Astrocyte of the cerebellum (primary cell): ENCODE measurements at regions of chr17 and their contacts with region 1.

Region 1: DNA sequence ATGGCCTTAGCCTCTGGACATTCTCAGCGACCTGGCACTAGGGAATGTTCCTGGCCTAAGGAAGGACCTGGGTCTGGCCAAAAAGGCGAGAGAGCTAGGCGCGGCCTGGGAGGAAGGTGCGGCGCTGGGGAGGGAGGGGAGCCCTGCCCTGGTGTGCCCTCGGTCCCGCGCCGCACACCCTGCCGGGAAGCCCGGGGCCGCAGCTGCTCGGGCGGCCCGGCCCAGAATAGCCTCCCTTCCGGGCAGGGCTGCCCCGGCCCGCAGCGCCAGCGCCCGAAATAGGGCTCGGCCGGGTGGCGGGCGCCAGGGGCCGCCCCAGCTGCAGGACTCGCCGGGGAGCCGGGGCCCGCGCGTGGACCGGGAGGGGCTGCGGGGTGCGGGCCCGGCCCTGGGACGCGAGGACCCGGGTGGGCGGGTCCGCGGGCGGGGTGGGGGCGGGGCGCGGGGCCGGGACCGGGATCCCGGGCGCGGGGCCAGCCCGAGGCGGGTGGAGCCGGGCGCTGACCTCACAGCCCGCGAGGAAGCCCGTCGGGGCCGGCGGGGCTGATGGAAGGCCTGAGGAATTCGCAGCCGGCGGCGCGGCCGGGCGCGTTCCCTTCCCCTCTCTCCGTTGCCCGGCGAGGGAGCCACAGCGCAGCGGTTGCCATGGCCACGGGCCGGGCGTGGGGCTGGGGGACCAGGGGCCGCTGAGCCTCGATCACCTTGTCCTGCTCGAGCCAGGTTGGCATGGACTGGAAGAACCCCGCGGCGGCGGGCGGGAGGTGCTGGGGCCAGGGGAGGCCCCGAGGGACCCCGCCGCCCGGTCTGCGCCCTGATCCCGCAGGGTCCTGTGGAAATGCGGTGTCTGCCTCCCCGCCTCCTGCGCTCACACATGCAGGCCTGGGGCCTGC is 18.1 kb downstream of the SOCS3 start:
- DNase-seq: no peak
- H3K4me3 ChIP-seq: peak overlapping the region; percentile 31
- CTCF ChIP-seq: no peak

Region 2: GRCh38 chr17:78289802-78290363 is 51.9 kb before region 1 on chr17:
- in situ Hi-C with region 1: loop called (anchors 5 kb)
- DNase-seq: peak; percentile 80
- H3K4me3 ChIP-seq: no peak overlapping the region
- CTCF ChIP-seq: peak; percentile 92

Region 3: DNA sequence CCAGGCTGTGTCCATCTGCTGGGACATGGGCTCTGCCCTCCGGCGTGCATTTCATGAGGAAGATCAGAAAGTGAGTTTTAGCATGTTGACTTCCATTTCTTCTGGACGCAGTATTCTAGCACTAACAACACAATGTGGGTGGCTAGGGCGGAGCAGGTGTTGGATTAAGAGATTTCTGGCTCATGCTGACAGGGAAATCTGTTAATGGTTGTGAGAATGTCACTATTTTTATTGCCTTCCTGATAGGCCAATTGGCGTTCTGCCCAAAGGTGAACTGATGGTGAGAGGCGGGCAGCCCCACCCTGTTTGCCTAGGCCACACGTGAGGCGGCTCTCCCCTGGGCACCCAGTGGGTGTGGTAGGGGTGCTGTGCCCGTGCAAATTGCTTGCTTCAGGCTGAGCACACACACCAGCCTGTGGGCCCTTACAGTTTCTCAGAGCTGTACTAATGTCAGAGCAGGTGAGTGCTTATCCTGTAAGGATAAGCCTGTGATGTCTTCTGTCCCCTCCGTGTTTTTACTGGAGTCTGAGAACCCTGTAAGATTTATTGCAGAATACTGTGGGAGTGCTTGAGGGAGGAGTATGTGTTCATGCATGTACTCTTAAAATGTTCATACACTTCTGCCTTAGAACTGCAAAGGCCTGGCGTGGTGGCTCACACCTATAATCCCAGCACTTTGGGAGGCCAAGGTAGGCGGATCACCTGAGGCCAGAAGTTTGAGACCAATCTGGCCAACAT is 67.6 kb after region 1 on chr17:
- in situ Hi-C with region 1: no loop called
- DNase-seq: no peak
- H3K4me3 ChIP-seq: no peak overlapping the region
- CTCF ChIP-seq: no peak

Region 4: GRCh38 chr17:78421484-78422266 is 79.9 kb after region 1 on chr17:
- in situ Hi-C with region 1: loop called (anchors 5 kb)
- DNase-seq: no peak
- H3K4me3 ChIP-seq: no peak overlapping the region
- CTCF ChIP-seq: peak; percentile 100